Psoas muscle (tissue), 8 donors: ENCODE measurements at regions of chr16 and their contacts with region 1.

Region 1: GRCh38 chr16:48971571-48972077 is 310.0 kb downstream of the CBLN1 start:
- DNase-seq: no peak
- ATAC-seq: no peak
- H3K4me3 ChIP-seq: no peak overlapping the region
- H3K27ac ChIP-seq: no peak overlapping the region
- H3K4me1 ChIP-seq: no peaks in the 10 kb centered on the region
- H3K27me3 ChIP-seq: peaks cover 0 to 2% (median 0%) of the 10 kb centered on the region in 3 donors
- CTCF ChIP-seq: no peak

Region 2: GRCh38 chr16:48911700-48912099 is 59.9 kb before region 1 on chr16:
- intact Hi-C with region 1: no loop called
- DNase-seq: no peak
- ATAC-seq: no peak
- H3K4me3 ChIP-seq: no peak overlapping the region
- H3K27ac ChIP-seq: no peak overlapping the region
- H3K4me1 ChIP-seq: no peaks in the 10 kb centered on the region
- H3K27me3 ChIP-seq: no peaks in the 10 kb centered on the region
- CTCF ChIP-seq: no peak

Region 3: GRCh38 chr16:49021136-49021535 is 49.5 kb after region 1 on chr16:
- intact Hi-C with region 1: loop called in 1 of 2 experiments (anchors 5 kb)
- DNase-seq: no peak
- ATAC-seq: no peak
- H3K4me3 ChIP-seq: no peak overlapping the region
- H3K27ac ChIP-seq: no peak overlapping the region
- H3K4me1 ChIP-seq: no peaks in the 10 kb centered on the region
- H3K27me3 ChIP-seq: peaks cover 0 to 20% (median 17%) of the 10 kb centered on the region in 3 donors
- CTCF ChIP-seq: no peak